Left lung (tissue), 14 donors: ENCODE measurements at regions of chr7 and their contacts with region 1.

Region 1: DNA sequence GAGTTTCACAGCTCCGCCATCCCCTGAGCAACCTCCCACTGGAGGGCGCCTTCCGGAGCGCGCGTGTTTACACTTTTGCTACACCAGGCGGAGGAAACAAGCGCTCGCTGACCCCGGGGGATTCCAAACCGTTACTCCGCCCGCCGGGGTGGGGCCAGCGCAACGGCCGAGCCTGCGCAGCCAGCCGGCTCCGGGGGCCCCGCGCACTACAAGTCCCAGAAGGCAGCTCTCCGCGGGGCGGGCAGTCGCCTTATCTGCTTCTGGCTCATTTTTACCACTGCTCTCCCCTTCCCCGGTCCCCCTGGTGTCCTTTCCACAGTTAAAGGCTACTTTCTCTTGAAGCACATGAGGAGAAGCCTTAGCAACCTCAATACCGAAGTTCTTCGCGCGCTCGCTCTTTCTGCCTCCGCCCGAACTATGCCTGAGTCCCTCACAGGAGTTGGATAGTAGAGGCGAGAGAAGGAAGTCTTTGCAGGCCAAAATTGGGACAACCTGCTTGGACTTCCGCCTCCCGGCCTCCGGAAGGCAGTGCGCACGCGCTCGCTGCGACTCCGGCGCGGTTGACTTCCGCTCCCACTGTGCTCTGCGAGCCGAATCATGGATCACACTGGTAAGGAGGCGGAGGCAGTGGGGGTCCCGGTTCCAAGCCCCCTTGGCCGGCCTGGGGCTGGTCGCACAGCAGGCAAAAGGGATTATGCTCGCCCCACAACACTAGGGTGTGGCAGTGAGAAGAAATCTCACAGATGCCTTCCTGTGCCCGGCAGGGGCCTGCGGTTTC is at the start of gene CBLL1:
- DNase-seq: peak; percentile 97 to 99 (median 97)
- ATAC-seq: peak; percentile 98
- H3K4me3 ChIP-seq: peak within 1 kb of the TSS; percentile 88 to 97
- H3K27ac ChIP-seq: peak within 1 kb of the TSS; percentile 98 to 99
- H3K4me1 ChIP-seq: peaks cover 17 to 48% of the 10 kb centered on the region in 2 donors
- H3K27me3 ChIP-seq: no peaks in the 10 kb centered on the region
- CTCF ChIP-seq: peak; percentile 48 to 58
- polyA plus RNA-seq, gene CBLL1: 27.7 to 31.8 (median 29.0) TPM

Region 2: DNA sequence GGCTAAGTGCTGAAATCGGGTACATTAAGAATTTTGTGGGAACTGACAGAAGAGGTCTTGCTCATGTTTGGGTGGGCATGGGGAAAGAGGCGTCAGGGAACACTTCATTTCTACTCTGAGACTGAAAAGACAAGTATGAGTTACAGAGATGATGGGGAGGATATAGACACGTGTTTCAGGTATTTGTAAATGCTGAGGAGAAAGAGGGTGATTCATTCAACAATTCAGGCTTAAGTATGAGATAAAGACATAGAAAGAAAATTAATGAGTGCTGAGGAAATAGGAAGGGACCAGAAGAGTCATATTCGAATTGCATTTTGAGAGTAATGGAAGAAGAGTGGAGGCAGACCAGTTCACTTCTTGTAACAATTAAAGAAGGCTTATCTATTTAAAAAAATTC is 431.3 kb before region 1 on chr7:
- intact Hi-C with region 1: no loop called
- DNase-seq: no peak
- ATAC-seq: no peak
- H3K4me3 ChIP-seq: no peak overlapping the region
- H3K27ac ChIP-seq: no peak overlapping the region
- H3K4me1 ChIP-seq: no peaks in the 10 kb centered on the region
- H3K27me3 ChIP-seq: no peaks in the 10 kb centered on the region
- CTCF ChIP-seq: no peak

Region 3: GRCh38 chr7:107879400-107880035 is 135.8 kb after region 1 on chr7:
- intact Hi-C with region 1: loop called in 1 of 2 experiments (anchors 10 kb)
- DNase-seq: peak in 2 of 4 donors; percentile 29 to 66
- ATAC-seq: peak; percentile 86
- H3K4me3 ChIP-seq: no peak overlapping the region
- H3K27ac ChIP-seq: no peak overlapping the region
- H3K4me1 ChIP-seq: peaks cover 0 to 28% of the 10 kb centered on the region in 2 donors
- H3K27me3 ChIP-seq: peaks cover 0 to 6% of the 10 kb centered on the region in 2 donors
- CTCF ChIP-seq: peak; percentile 66 to 76